Aorta (tissue), 5 donors: ENCODE measurements at regions of chr9 and their contacts with region 1.

Region 1: DNA sequence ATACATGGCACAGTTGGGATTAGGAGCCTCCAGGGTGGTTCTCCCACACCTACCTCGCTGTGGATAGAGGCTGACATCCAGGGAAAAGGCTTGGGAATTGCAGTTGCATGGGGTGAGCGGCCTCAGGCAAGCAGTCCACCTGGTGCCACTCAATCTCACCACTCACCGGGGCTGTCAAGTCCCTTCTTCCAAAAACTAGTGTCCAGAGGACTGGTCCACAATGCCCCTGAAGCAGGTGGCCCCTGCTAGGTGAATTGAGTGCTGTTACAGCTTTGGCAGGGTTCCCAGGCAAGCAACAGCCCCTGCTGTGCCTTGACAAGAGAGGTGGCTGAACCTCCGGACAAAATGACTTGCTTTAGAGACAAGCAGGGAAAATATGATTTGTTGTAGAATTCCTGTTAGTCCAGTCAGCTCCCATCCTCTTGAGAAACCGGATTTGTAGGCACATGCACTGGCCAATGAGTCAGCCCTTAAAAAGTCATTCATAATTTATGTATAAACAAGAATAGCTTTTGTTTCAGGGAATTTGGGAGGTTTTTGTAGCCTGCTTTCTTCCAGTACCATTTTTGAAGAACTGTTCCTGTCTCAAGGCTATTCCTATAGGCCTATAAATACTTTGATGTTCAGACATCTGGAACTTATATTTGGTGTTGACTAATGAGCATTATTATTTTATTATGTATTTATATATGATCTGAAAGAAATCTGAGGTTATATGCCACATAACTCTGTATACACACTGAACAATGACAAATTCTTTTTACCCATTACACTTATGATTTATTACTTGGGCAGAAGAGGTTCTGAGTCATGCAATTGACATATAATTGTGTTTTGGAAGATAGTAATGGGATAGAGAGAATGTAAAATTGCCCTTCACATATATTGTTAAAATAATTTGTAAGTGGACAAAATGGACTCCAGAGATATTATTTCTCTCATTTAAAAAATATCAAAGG is 411.1 kb downstream of the ACTL7B start:
- DNase-seq: peak in 1 of 2 donors; percentile 68
- ATAC-seq: peak; percentile 71
- H3K4me3 ChIP-seq: no peak overlapping the region
- H3K27ac ChIP-seq: peak overlapping the region in 1 of 2 donors; percentile 30
- H3K4me1 ChIP-seq: peaks cover 0 to 3% of the 10 kb centered on the region in 2 donors
- H3K27me3 ChIP-seq: no peaks in the 10 kb centered on the region

Region 2: DNA sequence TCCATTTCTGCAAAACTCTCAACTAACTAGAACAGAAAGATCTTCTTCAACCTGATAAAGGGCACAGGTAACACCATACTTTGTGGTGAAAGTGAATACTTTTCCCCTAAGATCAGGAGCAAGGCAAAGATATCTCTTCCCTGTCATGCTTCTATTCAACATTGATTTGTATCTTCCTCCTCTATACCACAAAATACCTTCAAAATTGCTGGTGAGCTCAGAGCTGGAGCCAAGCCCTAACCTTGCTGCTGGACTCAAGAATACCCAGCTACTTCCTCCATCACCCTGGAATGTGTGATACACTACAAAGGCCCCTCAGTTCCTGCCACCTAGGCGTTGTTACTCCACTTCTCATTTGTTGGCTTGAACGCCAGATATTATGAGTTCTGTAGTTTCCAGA is 87.9 kb before region 1 on chr9:
- intact Hi-C with region 1: loop called in 1 of 2 experiments (anchors 10 kb)
- DNase-seq: no peak
- ATAC-seq: no peak
- H3K4me3 ChIP-seq: no peak overlapping the region
- H3K27ac ChIP-seq: no peak overlapping the region
- H3K4me1 ChIP-seq: no peaks in the 10 kb centered on the region
- H3K27me3 ChIP-seq: no peaks in the 10 kb centered on the region

Region 3: DNA sequence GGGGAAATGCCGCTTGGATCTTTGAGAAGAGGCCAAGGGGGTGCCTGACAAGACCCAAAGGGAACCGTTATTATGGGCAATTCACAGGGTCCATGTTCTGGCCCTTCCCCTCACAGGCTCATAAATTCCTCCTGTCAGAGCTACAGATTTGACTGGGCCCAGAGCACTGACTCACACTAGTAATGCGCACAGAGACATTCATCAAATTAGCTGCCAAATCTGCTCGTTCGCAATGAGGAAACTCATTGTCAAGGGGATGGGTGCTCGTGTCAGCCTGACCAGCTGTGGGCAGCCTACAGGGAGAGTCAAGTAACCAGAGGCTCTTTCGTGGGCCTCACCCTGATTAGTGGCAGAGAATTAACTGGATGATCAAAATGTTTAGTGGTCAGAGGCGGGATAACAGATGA is 33.8 kb after region 1 on chr9:
- intact Hi-C with region 1: loop called in 1 of 2 experiments (anchors 2 kb)
- DNase-seq: peak in 1 of 2 donors; percentile 67
- ATAC-seq: peak; percentile 78
- H3K4me3 ChIP-seq: no peak overlapping the region
- H3K27ac ChIP-seq: peak overlapping the region; percentile 72 to 90
- H3K4me1 ChIP-seq: peaks cover 0 to 2% of the 10 kb centered on the region in 2 donors
- H3K27me3 ChIP-seq: no peaks in the 10 kb centered on the region